Calu3 (cell line): ENCODE measurements at regions of chr21 and their contacts with region 1.

Region 1: GRCh38 chr21:34603002-34603709 is 11.8 kb downstream of the RCAN1 start:
- DNase-seq: peak; percentile 80
- H3K4me3 Mint-ChIP-seq: no peak overlapping the region
- H3K27ac Mint-ChIP-seq: no peak overlapping the region
- H3K4me1 Mint-ChIP-seq: peaks cover 18% of the 10 kb centered on the region
- H3K27me3 Mint-ChIP-seq: no peaks in the 10 kb centered on the region
- CTCF ChIP-seq: peak; percentile 36

Region 2: DNA sequence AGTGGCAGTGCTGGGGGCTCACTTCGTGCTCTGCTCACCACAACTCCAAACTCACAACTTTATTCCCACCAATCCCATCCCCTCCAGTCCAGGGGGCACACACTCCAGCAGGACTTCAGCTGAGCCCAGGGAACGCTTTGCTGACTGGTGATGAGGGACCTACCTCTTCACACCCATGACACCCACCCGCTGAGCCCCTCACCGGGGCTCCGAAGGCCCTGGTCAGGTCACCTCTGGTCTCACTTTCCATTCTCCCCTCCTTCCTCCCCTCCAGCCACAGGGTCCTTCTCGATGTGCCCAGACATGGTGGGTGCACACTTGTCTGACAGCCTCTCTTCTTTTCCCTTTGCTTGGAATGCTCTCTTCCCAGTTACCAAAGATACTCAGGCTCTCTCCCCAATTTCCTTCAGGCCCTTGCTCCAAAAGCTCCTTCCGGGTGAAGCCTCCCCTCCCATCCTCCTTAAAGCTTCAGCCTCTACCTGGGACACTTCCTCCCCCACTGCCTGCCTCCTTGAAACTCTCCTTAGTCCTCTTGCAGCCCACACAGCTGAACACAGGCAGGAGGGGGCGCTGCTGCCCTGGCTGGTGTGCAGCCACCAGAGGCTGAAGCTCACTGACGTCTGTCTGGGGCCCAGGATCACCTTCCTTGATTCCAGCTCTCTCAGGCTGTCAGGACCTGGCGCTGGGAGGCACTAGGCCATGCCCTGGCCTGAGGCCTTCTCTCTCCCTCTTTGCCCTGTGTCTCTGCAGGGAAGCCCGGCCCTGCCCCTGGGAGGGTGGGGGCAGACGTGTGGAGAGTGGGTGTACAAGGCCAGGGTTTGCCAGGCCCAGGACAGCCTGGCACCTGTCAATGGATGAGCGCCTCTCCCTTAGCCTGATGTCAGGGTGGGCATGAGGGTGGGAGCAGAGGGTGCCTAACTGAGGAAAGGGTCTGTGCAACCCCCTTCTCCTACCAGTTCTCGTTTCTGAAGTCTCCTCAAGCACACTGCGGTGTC is 92.7 kb before region 1 on chr21:
- CTCF ChIA-PET with region 1: interaction called, 17 read pairs
- intact Hi-C with region 1: no loop called
- DNase-seq: peak; percentile 81
- H3K4me3 Mint-ChIP-seq: no peak overlapping the region
- H3K27ac Mint-ChIP-seq: no peak overlapping the region
- H3K4me1 Mint-ChIP-seq: peaks cover 7% of the 10 kb centered on the region
- H3K27me3 Mint-ChIP-seq: peaks cover 12% of the 10 kb centered on the region
- CTCF ChIP-seq: peak; percentile 49

Region 3: DNA sequence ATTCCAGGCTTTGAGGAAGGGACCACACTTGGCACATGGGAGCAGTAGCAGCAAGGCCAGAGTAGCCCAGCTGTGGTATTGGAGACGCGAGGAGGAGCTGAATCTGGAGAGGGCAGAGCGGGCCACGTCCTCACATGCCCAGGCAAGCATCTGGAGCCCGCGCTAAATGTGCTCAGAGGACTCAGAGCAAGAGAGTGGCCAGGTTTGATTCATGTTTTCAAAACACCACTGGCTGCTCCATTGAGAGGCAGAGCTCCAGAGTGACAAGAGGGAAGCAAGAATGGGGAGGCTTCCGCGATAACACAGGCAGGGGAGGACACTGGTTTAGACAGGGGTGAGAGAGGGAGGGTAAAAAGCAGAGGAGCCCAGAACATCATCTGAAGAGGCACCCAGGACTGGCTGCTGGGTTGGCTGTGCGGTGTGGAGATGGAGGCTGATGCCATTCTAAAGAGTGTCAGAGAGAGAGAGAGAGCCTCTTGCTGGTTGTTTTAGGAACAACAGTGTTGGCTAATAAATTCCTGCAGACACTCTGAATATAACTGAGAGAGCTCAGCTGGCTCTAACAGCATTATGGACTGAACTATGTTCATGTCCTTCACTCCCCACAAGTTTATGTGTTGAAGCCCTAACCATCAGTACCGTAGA is 20.5 kb before region 1 on chr21:
- CTCF ChIA-PET with region 1: interaction called, 12 read pairs
- intact Hi-C with region 1: no loop called
- DNase-seq: peak; percentile 34
- H3K4me3 Mint-ChIP-seq: no peak overlapping the region
- H3K27ac Mint-ChIP-seq: peak overlapping the region; percentile 21
- H3K4me1 Mint-ChIP-seq: peaks cover 9% of the 10 kb centered on the region
- H3K27me3 Mint-ChIP-seq: no peaks in the 10 kb centered on the region
- CTCF ChIP-seq: no peak

Region 4: GRCh38 chr21:34614633-34615486 is 11.7 kb after region 1 on chr21 and contains the start of gene RCAN1:
- CTCF ChIA-PET with region 1: interaction called, 12 read pairs
- intact Hi-C with region 1: no loop called
- DNase-seq: peak; percentile 80
- H3K4me3 Mint-ChIP-seq: peak within 1 kb of the TSS; percentile 75
- H3K27ac Mint-ChIP-seq: no peak within 1 kb of the TSS
- H3K4me1 Mint-ChIP-seq: no peaks in the 10 kb centered on the region
- H3K27me3 Mint-ChIP-seq: peaks cover 31% of the 10 kb centered on the region
- CTCF ChIP-seq: no peak
- total RNA-seq, gene RCAN1: 25.4 and 25.7 TPM in 2 replicates